ENCODE measurements at regions of chr1 and their contacts with region 1.

Region 1: DNA sequence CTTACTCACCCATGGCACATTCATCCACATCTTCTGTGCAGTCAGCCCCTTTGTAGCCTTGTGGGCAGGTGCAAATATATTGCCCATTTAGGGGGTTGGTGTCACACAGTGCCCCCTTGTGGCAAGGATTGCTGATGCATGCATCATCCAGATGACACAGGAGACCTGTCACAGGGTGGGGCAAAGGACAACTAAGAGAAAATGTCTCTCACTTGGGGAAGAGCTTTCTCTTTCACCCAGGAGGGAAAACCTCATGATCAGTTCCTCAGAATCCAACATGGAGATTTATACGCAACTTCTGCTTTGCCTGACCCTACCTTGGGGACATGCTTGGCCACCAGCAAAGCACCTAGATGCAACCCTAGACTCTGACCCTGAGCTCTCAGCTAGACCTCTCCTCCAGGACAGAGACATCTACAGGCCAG is 71.8 kb upstream of the ADAM30 start:
- DNase-seq: peak; percentile 65
- H3K4me3 ChIP-seq: no peak overlapping the region
- H3K27ac ChIP-seq: peak overlapping the region; percentile 35
- H3K4me1 ChIP-seq: peaks cover 6% of the 10 kb centered on the region
- H3K27me3 ChIP-seq: no peaks in the 10 kb centered on the region
- CTCF ChIP-seq: peak; percentile 72 to 83

Region 2: DNA sequence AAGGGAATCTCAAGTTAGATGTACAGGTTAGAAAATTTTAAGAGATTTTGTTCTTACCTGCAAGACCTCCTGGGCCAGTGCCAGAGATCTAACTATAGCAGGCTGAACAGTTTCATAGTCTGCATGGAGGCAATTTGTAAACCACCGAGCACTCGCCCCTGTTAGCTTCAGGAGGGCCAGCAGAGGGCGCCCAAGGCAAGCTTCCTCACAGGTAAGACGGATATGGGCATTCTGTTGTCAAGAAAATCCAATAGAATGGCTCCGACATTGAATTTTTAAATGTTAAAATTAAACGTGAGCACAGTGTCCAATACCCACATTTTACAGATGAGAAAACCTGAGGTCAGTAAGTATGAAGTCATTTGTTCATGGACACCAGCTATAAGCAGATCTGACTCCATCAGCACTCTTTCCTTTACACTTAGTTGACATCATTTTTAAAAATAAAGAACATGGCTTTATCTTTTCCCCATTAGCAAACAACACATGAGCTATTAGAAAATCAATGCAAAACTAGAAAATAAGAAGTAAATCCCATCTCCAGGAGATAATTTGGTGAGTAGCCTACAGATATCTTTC is 159.0 kb before region 1 on chr1:
- CTCF ChIA-PET with region 1: no interaction called
- dilution Hi-C with region 1: no loop called
- in situ Hi-C with region 1: no loop called
- intact Hi-C with region 1: loop called (anchors 5 kb)
- DNase-seq: peak; percentile 54
- H3K4me3 ChIP-seq: no peak overlapping the region
- H3K27ac ChIP-seq: no peak overlapping the region
- H3K4me1 ChIP-seq: peaks cover 5% of the 10 kb centered on the region
- H3K27me3 ChIP-seq: no peaks in the 10 kb centered on the region
- CTCF ChIP-seq: peak; percentile 94